GM12878 (cell line): ENCODE measurements at regions of chr6 and their contacts with region 1.

Region 1: DNA sequence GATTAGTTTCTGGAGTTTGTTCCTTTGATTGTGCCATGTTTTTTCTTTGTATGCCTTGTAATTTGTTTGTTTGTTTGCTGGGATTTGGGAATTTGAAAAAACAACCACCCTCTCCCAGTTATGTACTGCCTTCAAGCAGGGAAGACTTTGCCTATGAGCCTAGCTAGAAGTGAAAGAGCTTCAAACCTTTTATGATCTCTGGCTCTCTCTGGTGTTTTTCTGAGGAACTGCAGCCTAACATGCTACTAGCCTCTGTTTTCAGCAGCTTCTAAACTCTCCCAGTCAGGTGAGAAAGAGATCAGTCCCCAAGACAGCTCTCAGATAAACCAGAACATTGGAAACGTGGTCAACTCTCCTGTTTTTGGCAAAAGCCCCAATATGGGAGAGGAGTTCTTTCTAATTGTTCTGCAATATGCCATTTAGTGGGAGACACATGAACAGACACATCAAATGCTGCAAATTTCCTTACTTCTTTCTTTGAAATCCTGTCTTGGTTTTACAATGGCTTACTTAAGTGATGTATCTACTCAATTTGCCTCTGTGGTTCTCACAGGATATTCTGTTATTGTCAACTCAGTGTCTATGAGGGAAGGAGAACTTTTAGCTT is 58.9 kb upstream of the SERINC1 start:
- DNase-seq: peak; percentile 27
- ATAC-seq: peak; percentile 96
- H3K4me3 ChIP-seq: no peak overlapping the region
- H3K27ac ChIP-seq: no peak overlapping the region
- H3K4me1 ChIP-seq: no peaks in the 10 kb centered on the region
- H3K27me3 ChIP-seq: no peaks in the 10 kb centered on the region
- CTCF ChIP-seq: peak; percentile 89 to 94 (median 90)
- EP300 ChIP-seq: no peak
- POLR2A ChIP-seq: no peak
- RAD21 ChIP-seq: peak; percentile 96

Region 2: GRCh38 chr6:122471107-122472021 is 59.2 kb before region 1 on chr6 and contains the start of gene SERINC1:
- CTCF ChIA-PET with region 1: interaction called, 11 read pairs
- POLR2A ChIA-PET with region 1: no interaction called
- RAD21 ChIA-PET with region 1: interaction called, 6 read pairs
- SMC1A ChIA-PET with region 1: interaction called, 9 read pairs
- in situ Hi-C with region 1: no loop called
- intact Hi-C with region 1: loop called (anchors 1 kb)
- DNase-seq: peak; percentile 66
- ATAC-seq: peak; percentile 98
- H3K4me3 ChIP-seq: peak within 1 kb of the TSS; percentile 92
- H3K27ac ChIP-seq: peak within 1 kb of the TSS; percentile 89
- H3K4me1 ChIP-seq: no peaks in the 10 kb centered on the region; the same call in 1 of the 2 replicates
- H3K27me3 ChIP-seq: no peaks in the 10 kb centered on the region
- CTCF ChIP-seq: no peak
- EP300 ChIP-seq: no peak
- POLR2A ChIP-seq: peak; percentile 91
- RAD21 ChIP-seq: no peak
- polyA plus RNA-seq, gene SERINC1: 18.5 to 22.5 TPM

Region 3: GRCh38 chr6:122491919-122492555 is 38.5 kb before region 1 on chr6:
- CTCF ChIA-PET with region 1: interaction called, 277 read pairs
- POLR2A ChIA-PET with region 1: no interaction called
- RAD21 ChIA-PET with region 1: interaction called, 115 read pairs
- SMC1A ChIA-PET with region 1: interaction called, 168 read pairs
- in situ Hi-C with region 1: no loop called
- intact Hi-C with region 1: loop called (anchors 1 kb)
- DNase-seq: no peak
- ATAC-seq: peak; percentile 100
- H3K4me3 ChIP-seq: no peak overlapping the region
- H3K27ac ChIP-seq: no peak overlapping the region
- H3K4me1 ChIP-seq: no peaks in the 10 kb centered on the region
- H3K27me3 ChIP-seq: no peaks in the 10 kb centered on the region
- CTCF ChIP-seq: peak; percentile 82 to 92 (median 87)
- EP300 ChIP-seq: no peak
- POLR2A ChIP-seq: no peak
- RAD21 ChIP-seq: peak; percentile 86

Region 4: DNA sequence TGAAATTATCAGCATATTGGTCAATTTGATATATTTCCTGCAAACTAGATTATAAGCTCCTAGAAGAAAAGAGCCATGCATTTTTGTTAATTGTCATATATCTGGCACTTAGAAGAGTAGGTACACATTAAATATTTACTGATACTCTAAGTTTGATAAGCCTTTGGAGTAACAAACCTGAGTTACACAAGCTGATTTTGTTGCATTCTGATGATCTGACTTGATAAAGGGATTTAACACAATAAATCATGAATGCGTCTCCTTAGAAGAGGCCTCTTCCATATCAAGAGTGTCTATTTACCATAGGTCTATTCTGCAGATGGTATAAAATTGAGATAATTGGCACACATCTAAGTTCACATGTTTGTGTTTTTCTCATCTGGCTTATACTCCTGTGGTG is 10.4 kb before region 1 on chr6:
- CTCF ChIA-PET with region 1: interaction called, 36 read pairs
- POLR2A ChIA-PET with region 1: no interaction called
- RAD21 ChIA-PET with region 1: interaction called, 7 read pairs
- SMC1A ChIA-PET with region 1: interaction called, 27 read pairs
- in situ Hi-C with region 1: no loop called
- intact Hi-C with region 1: no loop called
- DNase-seq: no peak
- ATAC-seq: no peak
- H3K4me3 ChIP-seq: no peak overlapping the region
- H3K27ac ChIP-seq: no peak overlapping the region
- H3K4me1 ChIP-seq: no peaks in the 10 kb centered on the region
- H3K27me3 ChIP-seq: no peaks in the 10 kb centered on the region; a peak in 1 of 4 replicates
- CTCF ChIP-seq: no peak
- EP300 ChIP-seq: no peak
- POLR2A ChIP-seq: no peak
- RAD21 ChIP-seq: no peak

Region 5: GRCh38 chr6:122580745-122581144 is 50.2 kb after region 1 on chr6:
- CTCF ChIA-PET with region 1: no interaction called
- POLR2A ChIA-PET with region 1: no interaction called
- RAD21 ChIA-PET with region 1: no interaction called
- SMC1A ChIA-PET with region 1: no interaction called
- in situ Hi-C with region 1: no loop called
- intact Hi-C with region 1: no loop called
- DNase-seq: no peak
- ATAC-seq: peak; percentile 50
- H3K4me3 ChIP-seq: no peak overlapping the region
- H3K27ac ChIP-seq: no peak overlapping the region
- H3K4me1 ChIP-seq: no peaks in the 10 kb centered on the region
- H3K27me3 ChIP-seq: no peaks in the 10 kb centered on the region
- CTCF ChIP-seq: no peak
- EP300 ChIP-seq: no peak
- POLR2A ChIP-seq: no peak
- RAD21 ChIP-seq: no peak